ENCODE measurements at regions of chr19 and their contacts with region 1.

Region 1: GRCh38 chr19:13150187-13150930 is at the starts of genes IER2 and STX10:
- DNase-seq: peak; percentile 88 to 97 (median 92)
- ATAC-seq: peak; percentile 56
- H3K4me3 ChIP-seq: peak within 1 kb of the TSS; percentile 83
- H3K4me3 Mint-ChIP-seq: peak within 1 kb of the TSS; percentile 99
- H3K27ac ChIP-seq: peak within 1 kb of the TSS; percentile 74 to 97
- H3K27ac Mint-ChIP-seq: peak within 1 kb of the TSS; percentile 98
- H3K4me1 ChIP-seq: peaks cover 33% of the 10 kb centered on the region
- H3K4me1 Mint-ChIP-seq: peaks cover 30% of the 10 kb centered on the region
- H3K27me3 ChIP-seq: no peaks in the 10 kb centered on the region
- H3K27me3 Mint-ChIP-seq: peaks cover 8% of the 10 kb centered on the region
- CTCF ChIP-seq: peak; percentile 66
- total RNA-seq, gene IER2: 254 to 255 TPM
- total RNA-seq, gene STX10: 40.9 to 43.9 TPM

Region 2: DNA sequence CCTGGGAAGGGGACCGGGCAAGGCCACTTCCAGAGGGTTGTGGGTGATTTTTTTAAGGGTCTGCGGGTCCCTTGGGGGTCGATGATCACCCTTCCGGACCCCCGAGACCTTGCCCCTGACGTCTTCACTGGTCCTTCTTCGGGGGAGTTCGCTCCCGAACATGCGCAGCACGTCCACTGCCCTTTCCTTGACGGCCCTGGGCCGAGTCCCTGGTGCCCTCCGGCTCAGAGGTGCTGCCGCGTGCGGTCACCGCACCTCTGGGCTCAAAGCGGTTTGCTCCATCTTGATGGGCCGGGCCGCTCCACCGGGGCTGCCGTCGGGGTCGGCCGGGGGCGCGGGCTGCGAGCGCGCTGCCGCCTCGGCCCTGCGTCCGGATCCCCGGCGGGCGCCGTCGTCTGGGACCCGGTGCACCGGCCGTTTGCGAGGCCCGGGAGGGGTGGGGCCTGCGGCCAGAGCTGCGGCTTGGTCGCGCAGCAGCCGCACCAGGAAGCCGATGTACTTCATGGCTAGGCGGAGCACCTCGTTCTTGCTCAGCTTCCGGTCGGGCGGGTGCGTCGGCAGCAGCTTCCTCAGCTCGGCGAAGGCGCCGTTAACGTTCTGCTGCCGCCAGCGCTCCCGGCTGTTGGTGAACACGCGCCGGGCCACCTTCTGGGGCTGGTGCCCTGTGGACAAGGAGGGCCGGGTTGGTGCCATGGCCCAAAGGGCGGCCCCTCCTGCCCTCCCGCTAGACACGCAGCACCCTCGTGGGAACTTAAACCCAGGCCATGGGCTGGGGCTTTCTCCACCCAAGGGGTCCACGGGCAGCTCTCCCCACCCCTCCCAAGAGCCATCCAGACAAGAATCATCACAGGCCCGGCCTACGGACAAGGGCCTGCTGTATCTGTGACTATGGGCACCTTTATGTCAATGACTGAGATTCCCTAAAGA is 51.0 kb before region 1 on chr19:
- CTCF ChIA-PET with region 1: interaction called, 6 read pairs
- POLR2A ChIA-PET with region 1: interaction called, 38 read pairs
- intact Hi-C with region 1: loop called (anchors 1 to 5 kb)
- DNase-seq: peak; percentile 68 to 93 (median 80)
- ATAC-seq: peak; percentile 70
- H3K4me3 ChIP-seq: peak overlapping the region; percentile 59
- H3K4me3 Mint-ChIP-seq: peak overlapping the region; percentile 85
- H3K27ac ChIP-seq: peak overlapping the region; percentile 87 to 89
- H3K27ac Mint-ChIP-seq: peak overlapping the region; percentile 91
- H3K4me1 ChIP-seq: peaks cover 99% of the 10 kb centered on the region
- H3K4me1 Mint-ChIP-seq: peaks cover 62% of the 10 kb centered on the region
- H3K27me3 ChIP-seq: peaks cover 23% of the 10 kb centered on the region in 2 experiments
- H3K27me3 Mint-ChIP-seq: peaks cover 26% of the 10 kb centered on the region
- CTCF ChIP-seq: no peak

Region 3: DNA sequence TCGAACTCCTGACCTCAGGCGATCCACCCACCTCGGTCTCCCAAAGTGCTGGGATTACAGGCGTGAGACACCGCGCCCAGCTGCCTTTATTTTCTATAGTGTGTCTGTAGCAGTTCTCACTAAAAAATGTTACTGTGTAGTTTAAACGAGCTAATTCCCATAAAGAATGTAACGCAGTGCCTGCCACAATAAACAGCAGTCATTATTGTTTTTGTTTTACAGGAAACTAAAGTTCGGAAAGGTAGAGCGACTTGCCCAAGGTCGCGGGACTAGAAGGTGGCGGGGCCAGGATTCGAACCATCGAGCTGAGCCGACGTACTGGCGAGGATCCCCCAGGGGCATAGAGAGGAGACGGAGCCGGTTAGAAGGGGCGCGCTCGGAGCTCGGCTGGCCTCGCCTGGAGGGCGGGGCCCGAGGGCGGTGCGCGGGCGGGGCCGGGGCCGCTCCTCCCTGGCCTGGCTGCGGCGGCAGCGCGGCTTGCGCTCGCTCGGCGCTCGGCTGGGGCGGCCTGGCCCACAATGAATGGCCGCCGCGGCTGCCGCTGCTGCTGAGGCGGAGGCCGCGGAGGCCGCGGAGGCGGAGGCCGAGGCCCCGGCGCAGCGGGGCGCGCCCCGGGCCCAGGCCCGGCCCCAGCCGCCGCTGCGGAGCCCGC is 32.5 kb before region 1 on chr19 and contains the start of gene NACC1:
- CTCF ChIA-PET with region 1: interaction called, 9 read pairs
- POLR2A ChIA-PET with region 1: interaction called, 60 read pairs
- intact Hi-C with region 1: loop called (anchors 1 to 2 kb)
- DNase-seq: peak; percentile 77 to 94 (median 87)
- ATAC-seq: peak; percentile 79
- H3K4me3 ChIP-seq: peak within 1 kb of the TSS; percentile 99
- H3K4me3 Mint-ChIP-seq: peak within 1 kb of the TSS; percentile 96
- H3K27ac ChIP-seq: peak within 1 kb of the TSS in 1 of 2 donors; percentile 48
- H3K27ac Mint-ChIP-seq: peak within 1 kb of the TSS; percentile 73
- H3K4me1 ChIP-seq: peaks cover 61% of the 10 kb centered on the region
- H3K4me1 Mint-ChIP-seq: peaks cover 66% of the 10 kb centered on the region
- H3K27me3 ChIP-seq: no peaks in the 10 kb centered on the region
- H3K27me3 Mint-ChIP-seq: no peaks in the 10 kb centered on the region
- CTCF ChIP-seq: no peak
- total RNA-seq, gene NACC1: 13.0 to 13.5 TPM

Region 4: GRCh38 chr19:13162518-13163314 is 12.4 kb after region 1 on chr19:
- CTCF ChIA-PET with region 1: interaction called, 27 read pairs
- POLR2A ChIA-PET with region 1: interaction called, 487 read pairs
- intact Hi-C with region 1: loop called in 1 of 2 experiments (anchors 1 kb)
- DNase-seq: peak; percentile 50 to 93 (median 80)
- ATAC-seq: peak; percentile 56
- H3K4me3 ChIP-seq: peak overlapping the region; percentile 60
- H3K4me3 Mint-ChIP-seq: peak overlapping the region; percentile 86
- H3K27ac ChIP-seq: peak overlapping the region; percentile 87 to 89
- H3K27ac Mint-ChIP-seq: peak overlapping the region; percentile 99
- H3K4me1 ChIP-seq: peaks cover 96% of the 10 kb centered on the region
- H3K4me1 Mint-ChIP-seq: peaks cover 71% of the 10 kb centered on the region
- H3K27me3 ChIP-seq: no peaks in the 10 kb centered on the region
- H3K27me3 Mint-ChIP-seq: no peaks in the 10 kb centered on the region
- CTCF ChIP-seq: no peak

Region 5: GRCh38 chr19:13195678-13196077 is 45.3 kb after region 1 on chr19:
- CTCF ChIA-PET with region 1: interaction called, 27 read pairs
- POLR2A ChIA-PET with region 1: interaction called, 34 read pairs
- intact Hi-C with region 1: loop called (anchors 1 to 5 kb)
- DNase-seq: peak; percentile 34 to 80 (median 56)
- ATAC-seq: no peak
- H3K4me3 ChIP-seq: no peak overlapping the region
- H3K4me3 Mint-ChIP-seq: peak overlapping the region; percentile 20
- H3K27ac ChIP-seq: no peak overlapping the region
- H3K27ac Mint-ChIP-seq: peak overlapping the region; percentile 51
- H3K4me1 ChIP-seq: peaks cover 48% of the 10 kb centered on the region
- H3K4me1 Mint-ChIP-seq: peaks cover 21% of the 10 kb centered on the region
- H3K27me3 ChIP-seq: no peaks in the 10 kb centered on the region
- H3K27me3 Mint-ChIP-seq: no peaks in the 10 kb centered on the region
- CTCF ChIP-seq: peak; percentile 59

Region 6: DNA sequence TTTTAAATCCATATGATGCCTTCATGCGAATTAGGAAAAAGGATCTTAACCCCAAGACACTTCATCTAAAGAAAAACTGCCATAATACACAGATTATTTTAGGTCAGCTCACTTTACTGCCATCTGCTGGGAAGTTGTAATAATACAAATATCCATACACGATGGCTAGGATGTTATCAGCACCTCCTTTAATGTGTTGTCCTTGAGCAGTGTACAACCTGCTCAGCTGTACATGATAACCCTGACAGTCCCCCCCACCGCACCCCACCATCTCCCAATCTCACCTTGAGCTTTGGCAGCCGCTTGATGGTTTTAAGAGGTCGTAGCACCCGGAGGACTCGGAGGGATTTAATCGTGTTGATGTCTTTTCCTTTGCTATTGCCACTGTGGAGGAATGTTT is 112.1 kb after region 1 on chr19:
- CTCF ChIA-PET with region 1: interaction called, 5 read pairs
- POLR2A ChIA-PET with region 1: interaction called, 8 read pairs
- intact Hi-C with region 1: loop called (anchors 2 to 5 kb)
- DNase-seq: peak in 3 of 14 experiments; percentile 70 to 74 (median 71)
- ATAC-seq: peak; percentile 64
- H3K4me3 ChIP-seq: no peak overlapping the region
- H3K4me3 Mint-ChIP-seq: no peak overlapping the region
- H3K27ac ChIP-seq: no peak overlapping the region
- H3K27ac Mint-ChIP-seq: no peak overlapping the region
- H3K4me1 ChIP-seq: no peaks in the 10 kb centered on the region
- H3K4me1 Mint-ChIP-seq: no peaks in the 10 kb centered on the region
- H3K27me3 ChIP-seq: no peaks in the 10 kb centered on the region
- H3K27me3 Mint-ChIP-seq: peaks cover 17% of the 10 kb centered on the region
- CTCF ChIP-seq: peak; percentile 64

Region 7: GRCh38 chr19:14097532-14098151 is 947.3 kb after region 1 on chr19:
- CTCF ChIA-PET with region 1: no interaction called
- POLR2A ChIA-PET with region 1: no interaction called
- intact Hi-C with region 1: no loop called
- DNase-seq: peak in 1 of 14 experiments; percentile 28
- ATAC-seq: no peak
- H3K4me3 ChIP-seq: no peak overlapping the region
- H3K4me3 Mint-ChIP-seq: no peak overlapping the region
- H3K27ac ChIP-seq: no peak overlapping the region
- H3K27ac Mint-ChIP-seq: no peak overlapping the region
- H3K4me1 ChIP-seq: no peaks in the 10 kb centered on the region
- H3K4me1 Mint-ChIP-seq: peaks cover 11% of the 10 kb centered on the region
- H3K27me3 ChIP-seq: no peaks in the 10 kb centered on the region
- H3K27me3 Mint-ChIP-seq: no peaks in the 10 kb centered on the region
- CTCF ChIP-seq: no peak